CD4-positive, alpha-beta memory T cell (primary cell): ENCODE measurements at regions of chr1 and their contacts with region 1.

Region 1: DNA sequence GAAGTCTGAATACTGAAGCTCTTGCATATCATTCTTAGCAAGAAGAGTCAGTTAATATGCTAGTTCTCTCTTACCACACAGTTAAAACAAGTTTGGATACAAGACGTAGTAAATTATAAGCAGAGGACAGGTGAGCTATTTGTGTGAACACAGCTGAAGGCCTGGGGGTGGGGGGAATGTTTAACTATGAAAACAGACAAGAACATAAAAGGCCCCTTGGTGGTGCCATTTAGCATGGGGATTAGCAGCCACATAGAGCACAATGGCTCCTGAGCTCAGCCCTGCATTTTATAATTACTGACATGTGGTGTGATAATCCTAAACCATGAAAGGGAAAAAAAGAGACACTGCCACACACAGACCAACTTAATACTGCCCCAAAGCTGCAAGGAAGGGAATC is 94.8 kb downstream of the TGFBR3 start:
- DNase-seq: no peak
- H3K4me3 ChIP-seq: no peak overlapping the region
- H3K4me3 Mint-ChIP-seq: peak overlapping the region in 2 of 8 donors; percentile 47 to 56
- H3K27ac ChIP-seq: no peak overlapping the region
- H3K27ac Mint-ChIP-seq: peak overlapping the region in 3 of 7 donors; percentile 33 to 79 (median 50)
- H3K4me1 ChIP-seq: peaks cover 30% of the 10 kb centered on the region
- H3K4me1 Mint-ChIP-seq: peaks cover 32 to 50% (median 37%) of the 10 kb centered on the region in 4 donors
- H3K27me3 ChIP-seq: no peaks in the 10 kb centered on the region
- H3K27me3 Mint-ChIP-seq: no peaks in the 10 kb centered on the region

Region 2: DNA sequence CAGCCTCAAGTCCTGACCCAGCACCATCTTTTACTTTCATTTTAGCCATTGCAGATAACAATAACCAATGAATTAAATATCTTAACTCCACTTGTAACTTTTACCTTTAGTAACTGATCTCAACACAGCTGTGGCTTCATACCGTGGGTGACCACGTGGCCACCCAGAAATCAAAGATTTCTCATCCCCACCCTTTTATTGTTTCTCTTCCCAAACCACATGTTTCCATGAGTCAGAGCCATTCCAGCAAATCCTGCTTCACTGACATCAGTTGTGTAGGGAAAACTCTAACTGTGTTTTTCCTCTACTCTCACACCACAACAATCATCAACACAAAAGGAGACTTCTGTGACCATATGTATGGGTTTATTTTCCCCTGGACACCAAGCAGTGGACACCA is 133.0 kb after region 1 on chr1:
- CTCF ChIA-PET with region 1: interaction called, 4 read pairs
- POLR2A ChIA-PET with region 1: no interaction called
- intact Hi-C with region 1: loop called (anchors 2 kb)
- DNase-seq: no peak
- H3K4me3 ChIP-seq: no peak overlapping the region
- H3K4me3 Mint-ChIP-seq: no peak overlapping the region
- H3K27ac ChIP-seq: no peak overlapping the region
- H3K27ac Mint-ChIP-seq: peak overlapping the region in 1 of 7 donors; percentile 42
- H3K4me1 ChIP-seq: no peaks in the 10 kb centered on the region
- H3K4me1 Mint-ChIP-seq: peaks cover 0 to 7% (median 5%) of the 10 kb centered on the region in 4 donors
- H3K27me3 ChIP-seq: no peaks in the 10 kb centered on the region
- H3K27me3 Mint-ChIP-seq: peaks cover 0 to 2% of the 10 kb centered on the region in 2 donors